CD8-positive, alpha-beta T cell (primary cell): ENCODE measurements at regions of chr12 and their contacts with region 1.

Region 1: DNA sequence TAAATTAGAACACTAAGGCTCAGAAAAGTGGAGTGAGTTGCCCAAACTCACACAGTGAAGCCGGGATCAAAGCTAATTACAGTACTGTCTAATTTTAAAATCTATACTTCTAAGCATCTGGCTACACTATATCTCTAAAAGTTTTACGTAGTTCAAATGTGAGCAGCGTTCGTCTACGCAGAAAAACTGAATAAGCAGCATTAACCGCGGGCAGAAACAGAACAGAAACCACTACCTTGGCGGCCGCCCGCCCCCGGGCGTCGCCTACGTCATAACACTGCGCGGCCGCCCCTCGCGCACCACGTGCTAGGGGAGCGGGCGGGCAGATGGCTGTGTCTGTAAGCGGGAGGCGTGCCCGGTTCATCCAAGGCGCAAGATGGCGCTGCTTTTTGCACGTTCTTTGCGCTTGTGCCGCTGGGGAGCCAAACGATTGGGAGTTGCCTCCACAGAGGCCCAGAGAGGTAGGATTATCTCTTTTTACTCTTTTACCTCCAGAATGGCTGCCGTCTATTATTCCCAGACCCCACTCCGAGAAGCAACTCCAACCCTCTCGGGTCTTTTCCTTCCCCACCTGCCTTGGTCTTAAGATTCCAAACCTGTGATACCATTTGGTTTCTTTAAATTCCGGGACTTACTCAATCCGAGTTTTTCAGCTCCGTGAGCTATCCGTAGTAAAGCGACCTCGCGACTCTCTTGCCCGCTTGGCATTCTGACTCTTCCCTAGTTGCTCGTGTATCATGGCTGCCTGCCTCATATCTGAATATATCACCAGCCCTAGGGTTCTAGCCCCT is at the start of gene SPRYD4:
- DNase-seq: peak; percentile 89 to 97 (median 93)
- ATAC-seq: peak; percentile 90
- H3K4me3 ChIP-seq: peak within 1 kb of the TSS; percentile 72 to 99
- H3K4me3 Mint-ChIP-seq: peak within 1 kb of the TSS; percentile 95
- H3K27ac ChIP-seq: peak within 1 kb of the TSS; percentile 93 to 96
- H3K27ac Mint-ChIP-seq: peak within 1 kb of the TSS; percentile 98
- H3K4me1 ChIP-seq: peaks cover 10% of the 10 kb centered on the region
- H3K4me1 Mint-ChIP-seq: peaks cover 35% of the 10 kb centered on the region
- H3K27me3 ChIP-seq: no peaks in the 10 kb centered on the region
- H3K27me3 Mint-ChIP-seq: no peaks in the 10 kb centered on the region
- CTCF ChIP-seq: no peak
- total RNA-seq, gene SPRYD4: 6.8 to 6.9 TPM

Region 2: GRCh38 chr12:56206457-56207166 is 261.8 kb before region 1 on chr12:
- CTCF ChIA-PET with region 1: interaction called, 9 read pairs
- POLR2A ChIA-PET with region 1: no interaction called
- intact Hi-C with region 1: loop called (anchors 1 to 5 kb)
- DNase-seq: peak in 6 of 9 experiments; percentile 31 to 59 (median 48)
- ATAC-seq: peak; percentile 63
- H3K4me3 ChIP-seq: no peak overlapping the region
- H3K4me3 Mint-ChIP-seq: no peak overlapping the region
- H3K27ac ChIP-seq: no peak overlapping the region
- H3K27ac Mint-ChIP-seq: no peak overlapping the region
- H3K4me1 ChIP-seq: no peaks in the 10 kb centered on the region
- H3K4me1 Mint-ChIP-seq: no peaks in the 10 kb centered on the region
- H3K27me3 ChIP-seq: no peaks in the 10 kb centered on the region
- H3K27me3 Mint-ChIP-seq: no peaks in the 10 kb centered on the region
- CTCF ChIP-seq: no peak

Region 3: DNA sequence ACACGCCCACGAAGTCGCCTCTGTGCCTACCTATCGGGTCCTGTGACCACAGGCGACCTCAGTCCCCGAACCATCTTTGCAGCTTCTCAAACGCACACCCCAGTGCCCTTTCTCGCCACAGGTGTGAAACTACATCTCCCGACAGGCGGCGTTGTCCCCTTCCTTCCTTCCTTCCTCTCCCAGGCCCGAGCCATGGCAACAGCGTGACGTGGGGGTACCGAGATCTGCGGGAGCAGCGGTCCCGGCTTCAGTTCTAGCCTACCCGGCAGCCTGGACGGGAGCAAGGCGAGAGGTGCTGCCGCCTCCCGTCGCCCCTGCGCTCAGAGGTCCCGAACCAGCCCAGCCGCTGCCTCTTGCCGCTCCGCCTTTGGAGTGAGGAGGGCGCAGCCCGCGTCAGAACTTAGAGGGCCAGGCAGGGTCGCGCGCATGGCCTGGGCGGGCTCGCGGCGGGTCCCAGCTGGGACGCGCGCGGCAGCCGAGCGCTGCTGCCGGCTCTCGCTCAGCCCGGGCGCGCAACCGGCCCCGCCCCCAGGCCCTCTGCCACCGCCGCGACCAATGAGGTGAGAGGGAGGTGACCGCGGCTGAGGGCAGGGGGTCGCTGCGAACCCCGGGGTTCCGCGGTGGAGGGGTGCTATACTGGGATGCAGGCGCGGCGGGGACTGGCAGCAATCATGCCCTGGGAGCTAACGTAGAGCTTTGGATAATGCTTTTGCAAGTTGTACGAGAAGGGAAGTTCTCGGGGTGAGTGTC is 201.5 kb before region 1 on chr12 and contains the start of gene COQ10A:
- CTCF ChIA-PET with region 1: interaction called, 6 read pairs
- POLR2A ChIA-PET with region 1: no interaction called
- intact Hi-C with region 1: loop called in 1 of 2 experiments (anchors 2 kb)
- DNase-seq: peak; percentile 77 to 95 (median 92)
- ATAC-seq: peak; percentile 87
- H3K4me3 ChIP-seq: peak within 1 kb of the TSS; percentile 87 to 89
- H3K4me3 Mint-ChIP-seq: peak within 1 kb of the TSS; percentile 92
- H3K27ac ChIP-seq: peak within 1 kb of the TSS; percentile 95 to 98
- H3K27ac Mint-ChIP-seq: peak within 1 kb of the TSS; percentile 92
- H3K4me1 ChIP-seq: peaks cover 12% of the 10 kb centered on the region
- H3K4me1 Mint-ChIP-seq: peaks cover 20% of the 10 kb centered on the region
- H3K27me3 ChIP-seq: no peaks in the 10 kb centered on the region
- H3K27me3 Mint-ChIP-seq: no peaks in the 10 kb centered on the region
- CTCF ChIP-seq: peak; percentile 66
- total RNA-seq, gene COQ10A: 29.5 to 38.8 TPM

Region 4: GRCh38 chr12:56333679-56334489 is 134.5 kb before region 1 on chr12 and contains the start of gene PAN2:
- CTCF ChIA-PET with region 1: interaction called, 23 read pairs
- POLR2A ChIA-PET with region 1: interaction called, 5 read pairs
- intact Hi-C with region 1: loop called (anchors 1 to 2 kb)
- DNase-seq: peak; percentile 87 to 98 (median 93)
- ATAC-seq: peak; percentile 80
- H3K4me3 ChIP-seq: peak within 1 kb of the TSS; percentile 47 to 85
- H3K4me3 Mint-ChIP-seq: peak within 1 kb of the TSS; percentile 96
- H3K27ac ChIP-seq: peak within 1 kb of the TSS; percentile 97 to 100
- H3K27ac Mint-ChIP-seq: peak within 1 kb of the TSS; percentile 100
- H3K4me1 ChIP-seq: peaks cover 27% of the 10 kb centered on the region
- H3K4me1 Mint-ChIP-seq: peaks cover 53% of the 10 kb centered on the region
- H3K27me3 ChIP-seq: no peaks in the 10 kb centered on the region
- H3K27me3 Mint-ChIP-seq: no peaks in the 10 kb centered on the region
- CTCF ChIP-seq: peak; percentile 64
- total RNA-seq, gene PAN2: 111 to 113 TPM

Region 5: GRCh38 chr12:56448860-56449621 is 19.4 kb before region 1 on chr12 and contains the start of gene TIMELESS:
- CTCF ChIA-PET with region 1: interaction called, 18 read pairs
- POLR2A ChIA-PET with region 1: interaction called, 5 read pairs
- intact Hi-C with region 1: loop called (anchors 1 kb)
- DNase-seq: peak; percentile 63 to 93 (median 83)
- ATAC-seq: peak; percentile 95
- H3K4me3 ChIP-seq: peak within 1 kb of the TSS; percentile 84 to 94
- H3K4me3 Mint-ChIP-seq: peak within 1 kb of the TSS; percentile 91
- H3K27ac ChIP-seq: peak within 1 kb of the TSS; percentile 34 to 68
- H3K27ac Mint-ChIP-seq: peak within 1 kb of the TSS; percentile 86
- H3K4me1 ChIP-seq: peaks cover 7% of the 10 kb centered on the region
- H3K4me1 Mint-ChIP-seq: peaks cover 14% of the 10 kb centered on the region
- H3K27me3 ChIP-seq: no peaks in the 10 kb centered on the region
- H3K27me3 Mint-ChIP-seq: no peaks in the 10 kb centered on the region
- CTCF ChIP-seq: no peak
- total RNA-seq, gene TIMELESS: 1.7 to 2.2 TPM

Region 6: GRCh38 chr12:56636675-56637540 is 168.5 kb after region 1 on chr12:
- CTCF ChIA-PET with region 1: no interaction called
- POLR2A ChIA-PET with region 1: no interaction called
- intact Hi-C with region 1: no loop called
- DNase-seq: peak; percentile 91 to 99 (median 97)
- ATAC-seq: peak; percentile 71
- H3K4me3 ChIP-seq: peak overlapping the region; percentile 58 to 79
- H3K4me3 Mint-ChIP-seq: peak overlapping the region; percentile 98
- H3K27ac ChIP-seq: peak overlapping the region; percentile 79 to 87
- H3K27ac Mint-ChIP-seq: peak overlapping the region; percentile 97
- H3K4me1 ChIP-seq: peaks cover 45% of the 10 kb centered on the region
- H3K4me1 Mint-ChIP-seq: peaks cover 57% of the 10 kb centered on the region
- H3K27me3 ChIP-seq: no peaks in the 10 kb centered on the region
- H3K27me3 Mint-ChIP-seq: no peaks in the 10 kb centered on the region
- CTCF ChIP-seq: peak; percentile 71